ENCODE measurements at regions of chr13 and their contacts with region 1.

Region 1: DNA sequence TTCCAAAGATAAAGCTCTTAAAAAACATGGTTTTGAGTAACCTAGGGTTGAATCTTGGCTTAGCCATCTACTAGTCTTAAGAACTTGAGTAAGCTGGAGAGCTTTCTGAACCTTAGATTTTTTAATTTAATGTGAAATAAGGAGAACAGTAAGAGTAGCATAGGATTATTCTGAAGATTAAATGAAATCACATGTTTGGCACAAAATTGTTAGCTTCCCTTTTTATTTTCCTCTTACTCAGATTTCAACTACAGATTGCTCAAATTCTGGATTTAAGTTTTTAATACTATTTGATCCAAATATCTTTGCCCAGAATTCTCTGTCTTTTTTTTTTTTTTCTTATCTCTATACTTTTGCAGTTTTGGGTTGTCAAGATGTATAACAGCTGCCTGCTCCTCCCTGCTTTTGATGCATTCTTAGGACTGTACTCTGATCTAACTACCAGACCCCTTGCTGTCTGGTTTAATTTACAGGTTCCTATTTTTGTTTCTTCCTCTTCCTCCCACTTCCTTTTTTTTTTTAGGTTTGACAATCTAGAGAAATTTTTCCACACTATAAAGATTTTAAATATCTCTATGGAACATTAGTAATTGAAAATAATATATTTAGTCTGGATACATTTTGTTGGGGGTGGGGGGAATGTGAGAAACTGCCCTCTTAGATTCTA is 12.3 kb downstream of the POMP start:
- DNase-seq: no peak
- CTCF ChIP-seq: no peak

Region 2: DNA sequence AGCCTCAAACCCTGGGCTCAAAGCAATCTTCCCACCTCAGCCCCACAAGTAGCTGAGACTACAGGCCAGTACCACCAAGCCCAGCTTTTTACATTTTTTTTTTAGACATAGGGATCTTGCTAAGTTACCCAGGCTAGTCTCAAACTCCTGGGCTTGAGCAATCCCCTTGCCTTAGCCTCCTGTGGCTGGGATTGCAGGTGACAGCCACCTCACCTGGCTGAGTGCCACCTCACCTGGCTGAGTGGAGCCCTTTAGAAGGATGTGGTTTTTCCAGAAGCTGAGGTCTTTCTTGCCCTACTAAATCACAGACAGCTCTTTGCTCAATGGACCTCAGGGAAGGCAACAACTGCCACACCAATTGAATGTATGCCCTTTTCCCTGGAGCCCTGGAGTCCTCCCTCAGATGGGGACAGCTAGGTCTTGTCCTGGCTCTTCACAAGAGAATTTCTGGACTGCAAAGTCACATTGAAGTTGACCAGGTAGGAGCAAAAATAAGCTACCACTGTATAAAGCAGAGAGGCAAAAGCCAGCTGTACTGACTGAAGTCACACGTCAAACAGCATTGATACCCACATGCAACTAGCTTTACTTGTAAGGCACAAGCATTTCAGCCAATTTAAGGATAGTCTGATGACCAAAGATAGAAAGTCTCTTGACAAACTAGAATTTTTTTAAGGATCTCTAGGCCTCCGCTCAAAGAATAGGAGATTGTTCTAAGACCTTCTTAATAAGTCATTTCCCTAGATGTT is 737.5 kb before region 1 on chr13:
- CTCF ChIA-PET with region 1: no interaction called
- POLR2A ChIA-PET with region 1: no interaction called
- DNase-seq: no peak
- CTCF ChIP-seq: no peak

Region 3: DNA sequence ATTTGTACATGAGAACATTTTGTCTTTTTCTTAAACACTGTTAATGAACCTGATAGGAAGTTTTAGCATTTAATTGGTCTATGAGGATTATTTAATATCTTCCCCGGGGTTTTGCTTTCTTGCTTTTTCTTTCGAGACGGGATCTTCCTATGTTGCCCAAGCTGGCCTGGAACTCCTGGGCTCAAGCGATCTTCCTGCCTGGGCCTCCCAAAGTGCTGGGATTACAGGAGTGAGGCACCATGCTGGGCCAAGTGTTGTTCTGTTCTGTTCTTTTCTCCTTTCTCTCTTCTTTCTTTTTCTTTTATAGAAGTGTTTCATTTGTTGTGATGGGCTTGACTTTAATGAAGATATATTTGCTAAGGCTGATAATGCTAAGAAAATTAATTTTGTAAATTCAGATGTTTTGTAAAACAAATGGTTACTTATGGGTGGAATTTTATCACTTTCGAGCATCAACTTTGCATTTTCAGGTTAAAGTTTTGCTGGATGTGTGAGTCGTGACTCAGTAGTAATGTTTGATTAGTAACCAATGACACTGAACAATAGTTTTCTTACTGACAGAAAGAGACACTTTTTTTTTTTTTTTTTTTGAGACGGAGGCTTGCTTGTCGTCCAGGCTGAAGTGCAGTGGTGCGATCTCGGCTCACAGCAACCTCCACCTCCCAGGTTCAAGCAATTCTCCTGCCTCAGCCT is 530.7 kb before region 1 on chr13:
- CTCF ChIA-PET with region 1: no interaction called
- POLR2A ChIA-PET with region 1: interaction called, 10 read pairs
- DNase-seq: no peak
- CTCF ChIP-seq: no peak

Region 4: GRCh38 chr13:28778308-28779215 is 107.3 kb after region 1 on chr13:
- CTCF ChIA-PET with region 1: no interaction called
- POLR2A ChIA-PET with region 1: no interaction called
- DNase-seq: no peak
- CTCF ChIP-seq: no peak